CD8-positive, alpha-beta T cell (primary cell): ENCODE measurements at regions of chr13 and their contacts with region 1.

Region 1: DNA sequence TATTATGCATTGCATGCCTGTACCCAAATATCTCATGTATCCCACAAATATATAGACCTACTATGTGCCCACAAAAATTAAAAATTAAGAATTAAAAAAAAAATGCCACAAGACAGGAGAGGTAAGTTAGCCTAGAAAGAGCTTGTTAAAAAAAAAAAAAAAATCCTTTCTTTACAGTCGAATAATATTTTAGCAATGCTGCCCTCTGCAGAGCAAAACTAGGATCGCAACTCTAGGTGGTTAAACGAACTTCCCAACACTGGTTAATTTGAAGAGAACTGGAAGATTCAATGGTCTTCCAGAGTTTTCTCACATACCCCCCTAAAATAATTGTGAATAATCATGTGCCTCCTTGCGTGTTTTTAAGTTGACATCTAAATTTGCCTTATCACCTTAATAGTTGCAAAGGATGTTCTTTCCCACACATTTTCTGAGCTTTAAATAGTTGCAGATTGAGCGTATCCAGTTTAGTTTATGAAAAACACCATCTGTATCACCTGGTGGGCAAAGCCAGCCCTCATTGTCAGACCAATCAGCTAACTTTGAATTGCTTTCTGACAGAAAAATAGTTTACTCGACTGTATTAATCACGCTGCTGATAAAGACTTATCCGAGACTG is 47.4 kb upstream of the RCBTB2 start:
- DNase-seq: peak; percentile 50 to 82 (median 79)
- ATAC-seq: peak; percentile 79
- H3K4me3 ChIP-seq: no peak overlapping the region
- H3K4me3 Mint-ChIP-seq: no peak overlapping the region
- H3K27ac ChIP-seq: no peak overlapping the region
- H3K27ac Mint-ChIP-seq: no peak overlapping the region
- H3K4me1 ChIP-seq: no peaks in the 10 kb centered on the region
- H3K4me1 Mint-ChIP-seq: peaks cover 3% of the 10 kb centered on the region
- H3K27me3 ChIP-seq: no peaks in the 10 kb centered on the region
- H3K27me3 Mint-ChIP-seq: peaks cover 30% of the 10 kb centered on the region
- CTCF ChIP-seq: peak; percentile 85

Region 2: GRCh38 chr13:48400850-48401291 is 179.4 kb before region 1 on chr13:
- CTCF ChIA-PET with region 1: interaction called, 35 read pairs
- POLR2A ChIA-PET with region 1: interaction called, 3 read pairs
- intact Hi-C with region 1: loop called (anchors 1 kb)
- DNase-seq: peak in 2 of 9 experiments; percentile 24 to 48
- ATAC-seq: peak; percentile 38
- H3K4me3 ChIP-seq: no peak overlapping the region
- H3K4me3 Mint-ChIP-seq: no peak overlapping the region
- H3K27ac ChIP-seq: peak overlapping the region in 1 of 2 experiments; percentile 73
- H3K27ac Mint-ChIP-seq: peak overlapping the region; percentile 34
- H3K4me1 ChIP-seq: peaks cover 33% of the 10 kb centered on the region
- H3K4me1 Mint-ChIP-seq: peaks cover 46% of the 10 kb centered on the region
- H3K27me3 ChIP-seq: no peaks in the 10 kb centered on the region
- H3K27me3 Mint-ChIP-seq: no peaks in the 10 kb centered on the region
- CTCF ChIP-seq: no peak